ENCODE measurements at regions of chr14 and their contacts with region 1.

Region 1: GRCh38 chr14:92748259-92749016 is at the start of gene LGMN:
- DNase-seq: peak; percentile 92
- ATAC-seq: peak; percentile 99
- H3K4me3 ChIP-seq: peak within 1 kb of the TSS; percentile 80 to 89 (median 87)
- H3K27ac ChIP-seq: peak within 1 kb of the TSS; percentile 50
- H3K4me1 ChIP-seq: peaks cover 45% of the 10 kb centered on the region
- H3K27me3 ChIP-seq: no peaks in the 10 kb centered on the region; a peak in 1 of 5 replicates
- CTCF ChIP-seq: peak; percentile 19; the same call in 1 of the 2 replicates
- EP300 ChIP-seq: no peak
- POLR2A ChIP-seq: peak; percentile 91 to 99
- RAD21 ChIP-seq: peak; percentile 23; the same call in 1 of the 2 replicates
- total RNA-seq, gene LGMN: 10.4 and 28.9 TPM in 2 replicates

Region 2: GRCh38 chr14:92612988-92613658 is 135.3 kb before region 1 on chr14:
- CTCF ChIA-PET with region 1: no interaction called
- POLR2A ChIA-PET with region 1: no interaction called
- in situ Hi-C with region 1: no loop called
- intact Hi-C with region 1: no loop called
- DNase-seq: peak; percentile 20
- ATAC-seq: peak; percentile 93
- H3K4me3 ChIP-seq: no peak overlapping the region
- H3K27ac ChIP-seq: no peak overlapping the region
- H3K4me1 ChIP-seq: no peaks in the 10 kb centered on the region
- H3K27me3 ChIP-seq: no peaks in the 10 kb centered on the region
- CTCF ChIP-seq: peak; percentile 80
- EP300 ChIP-seq: no peak
- POLR2A ChIP-seq: no peak
- RAD21 ChIP-seq: peak; percentile 36; the same call in 1 of the 2 replicates

Region 3: DNA sequence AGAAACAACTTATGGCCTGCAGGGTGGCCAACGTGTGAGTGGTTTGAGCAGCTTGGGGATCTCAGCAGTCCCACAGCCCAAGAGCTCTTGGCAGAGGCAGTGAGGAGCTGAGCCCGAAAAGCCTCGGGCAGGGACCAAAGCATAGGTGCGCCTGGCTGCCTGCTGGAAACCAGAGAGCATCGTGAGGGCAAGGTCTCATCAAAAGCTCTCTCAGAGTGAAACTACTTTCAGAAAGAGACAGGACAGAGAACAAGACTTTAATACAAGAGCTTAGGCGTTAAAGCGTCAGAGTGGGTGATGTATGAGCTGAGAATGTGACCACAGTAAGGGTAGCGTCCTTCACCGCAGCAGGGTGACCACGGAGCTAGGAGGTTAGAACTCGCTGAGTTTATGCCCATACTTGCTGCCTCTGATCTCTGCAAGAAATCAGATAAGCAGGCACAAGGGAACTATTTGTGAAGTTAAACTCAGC is 30.8 kb before region 1 on chr14:
- CTCF ChIA-PET with region 1: no interaction called
- POLR2A ChIA-PET with region 1: interaction called, 5 read pairs
- in situ Hi-C with region 1: no loop called
- intact Hi-C with region 1: loop called (anchors 5 kb)
- DNase-seq: no peak
- ATAC-seq: no peak
- H3K4me3 ChIP-seq: no peak overlapping the region
- H3K27ac ChIP-seq: no peak overlapping the region
- H3K4me1 ChIP-seq: no peaks in the 10 kb centered on the region
- H3K27me3 ChIP-seq: no peaks in the 10 kb centered on the region
- CTCF ChIP-seq: no peak
- EP300 ChIP-seq: no peak
- POLR2A ChIP-seq: no peak
- RAD21 ChIP-seq: no peak

Region 4: DNA sequence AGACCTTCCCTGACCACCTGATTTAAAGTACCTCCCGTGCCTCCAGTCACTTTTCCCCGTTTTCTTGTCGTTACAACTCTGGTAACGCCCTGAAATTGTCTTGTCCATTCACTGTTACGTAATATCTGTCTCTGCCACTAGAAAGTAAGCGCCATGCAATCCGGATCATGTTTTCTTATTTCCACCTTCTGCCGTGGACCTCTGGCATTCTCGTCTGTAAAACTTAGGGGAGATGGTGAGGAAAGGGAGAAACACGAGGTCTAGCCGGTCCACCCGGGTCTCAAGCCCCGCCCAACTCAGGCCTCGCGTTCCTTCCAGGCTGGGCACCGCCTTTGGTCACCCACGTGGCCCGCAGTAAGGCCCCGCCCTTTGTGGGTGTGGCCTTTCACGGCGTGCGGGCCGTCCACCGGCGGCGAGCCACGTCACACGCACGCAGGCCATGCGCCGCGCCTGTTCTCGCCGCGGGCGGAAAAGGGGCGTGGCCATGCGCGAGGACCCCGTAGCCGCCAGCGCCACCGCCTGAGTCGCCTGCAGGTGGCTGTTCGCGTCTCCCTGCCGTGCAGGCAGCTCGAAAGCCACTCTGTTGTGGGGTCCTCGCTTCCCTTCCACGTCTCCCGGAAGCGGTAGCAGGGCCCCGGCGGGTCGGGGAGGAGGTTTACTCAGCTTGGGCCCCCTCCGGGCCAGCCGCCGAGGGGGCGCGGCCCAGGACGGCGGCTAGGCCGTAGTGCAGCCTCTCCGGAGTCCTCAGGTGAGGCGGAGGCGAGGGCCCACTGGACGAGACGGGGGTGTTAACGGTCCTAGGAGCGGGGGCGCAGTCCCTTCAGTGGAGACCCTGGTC is 45.5 kb after region 1 on chr14 and contains the start of gene GOLGA5:
- CTCF ChIA-PET with region 1: no interaction called
- POLR2A ChIA-PET with region 1: interaction called, 10 read pairs
- in situ Hi-C with region 1: no loop called
- intact Hi-C with region 1: no loop called
- DNase-seq: peak; percentile 95
- ATAC-seq: peak; percentile 93
- H3K4me3 ChIP-seq: peak within 1 kb of the TSS; percentile 75 to 91 (median 81)
- H3K27ac ChIP-seq: peak within 1 kb of the TSS; percentile 87
- H3K4me1 ChIP-seq: peaks cover 56% of the 10 kb centered on the region
- H3K27me3 ChIP-seq: no peaks in the 10 kb centered on the region; a peak in 1 of 5 replicates
- CTCF ChIP-seq: no peak; the same call in 1 of the 2 replicates
- EP300 ChIP-seq: 0 out of 4 replicates have a peak, but pooled peaks have one; percentile 16 to 25
- POLR2A ChIP-seq: peak; percentile 73 to 76
- RAD21 ChIP-seq: no peak; the same call in none of the 2 replicates
- total RNA-seq, gene GOLGA5: 40.0 and 54.6 TPM in 2 replicates